ENCODE measurements at regions of chr1 and their contacts with region 1.

Region 1: GRCh38 chr1:67060811-67061218 is 6.9 kb upstream of the SLC35D1 start:
- DNase-seq: peak; percentile 21 to 70
- H3K4me3 ChIP-seq: no peak overlapping the region
- H3K27ac ChIP-seq: peak overlapping the region; percentile 28 to 44
- H3K4me1 ChIP-seq: peaks cover 0 to 13% (median 0%) of the 10 kb centered on the region in 4 donors
- H3K27me3 ChIP-seq: no peaks in the 10 kb centered on the region
- CTCF ChIP-seq: no peak

Region 2: GRCh38 chr1:66552829-66553228 is 508.0 kb before region 1 on chr1:
- intact Hi-C with region 1: no loop called
- DNase-seq: no peak
- H3K4me3 ChIP-seq: no peak overlapping the region
- H3K27ac ChIP-seq: peak overlapping the region in 1 of 2 donors; percentile 21
- H3K4me1 ChIP-seq: peaks cover 0 to 97% (median 23%) of the 10 kb centered on the region in 4 donors
- H3K27me3 ChIP-seq: no peaks in the 10 kb centered on the region
- CTCF ChIP-seq: no peak

Region 3: DNA sequence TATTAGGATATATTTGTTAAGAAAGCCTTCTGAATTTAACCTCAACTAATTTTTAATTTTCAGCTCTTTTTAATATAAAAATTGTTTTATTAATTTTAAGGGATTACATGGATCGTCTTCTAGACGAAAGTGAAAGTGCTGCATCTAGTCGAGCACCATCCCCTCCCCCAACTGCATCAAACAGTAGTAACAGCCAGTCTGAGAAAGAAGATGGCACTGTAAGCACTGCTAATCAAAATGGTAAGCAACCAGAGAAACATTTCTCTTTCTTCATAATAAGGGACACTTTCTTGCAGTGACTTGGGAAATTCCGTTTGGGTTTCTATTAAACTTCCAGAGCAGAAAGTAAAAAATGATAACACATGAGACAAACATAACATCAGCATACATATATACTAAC is 79.1 kb before region 1 on chr1:
- intact Hi-C with region 1: no loop called
- DNase-seq: no peak
- H3K4me3 ChIP-seq: peak overlapping the region; percentile 2 to 34
- H3K27ac ChIP-seq: peak overlapping the region; percentile 8 to 54
- H3K4me1 ChIP-seq: peaks cover 0 to 15% (median 2%) of the 10 kb centered on the region in 4 donors
- H3K27me3 ChIP-seq: no peaks in the 10 kb centered on the region
- CTCF ChIP-seq: no peak

Region 4: GRCh38 chr1:67134695-67135094 is 73.9 kb after region 1 on chr1 and contains the start of gene C1orf141:
- intact Hi-C with region 1: loop called (anchors 10 kb)
- DNase-seq: no peak
- H3K4me3 ChIP-seq: peak within 1 kb of the TSS; percentile 20 to 37
- H3K27ac ChIP-seq: no peak within 1 kb of the TSS
- H3K4me1 ChIP-seq: peaks cover 0 to 9% (median 5%) of the 10 kb centered on the region in 4 donors
- H3K27me3 ChIP-seq: no peaks in the 10 kb centered on the region
- CTCF ChIP-seq: no peak